ENCODE measurements at regions of chr10 and their contacts with region 1.

Region 1: DNA sequence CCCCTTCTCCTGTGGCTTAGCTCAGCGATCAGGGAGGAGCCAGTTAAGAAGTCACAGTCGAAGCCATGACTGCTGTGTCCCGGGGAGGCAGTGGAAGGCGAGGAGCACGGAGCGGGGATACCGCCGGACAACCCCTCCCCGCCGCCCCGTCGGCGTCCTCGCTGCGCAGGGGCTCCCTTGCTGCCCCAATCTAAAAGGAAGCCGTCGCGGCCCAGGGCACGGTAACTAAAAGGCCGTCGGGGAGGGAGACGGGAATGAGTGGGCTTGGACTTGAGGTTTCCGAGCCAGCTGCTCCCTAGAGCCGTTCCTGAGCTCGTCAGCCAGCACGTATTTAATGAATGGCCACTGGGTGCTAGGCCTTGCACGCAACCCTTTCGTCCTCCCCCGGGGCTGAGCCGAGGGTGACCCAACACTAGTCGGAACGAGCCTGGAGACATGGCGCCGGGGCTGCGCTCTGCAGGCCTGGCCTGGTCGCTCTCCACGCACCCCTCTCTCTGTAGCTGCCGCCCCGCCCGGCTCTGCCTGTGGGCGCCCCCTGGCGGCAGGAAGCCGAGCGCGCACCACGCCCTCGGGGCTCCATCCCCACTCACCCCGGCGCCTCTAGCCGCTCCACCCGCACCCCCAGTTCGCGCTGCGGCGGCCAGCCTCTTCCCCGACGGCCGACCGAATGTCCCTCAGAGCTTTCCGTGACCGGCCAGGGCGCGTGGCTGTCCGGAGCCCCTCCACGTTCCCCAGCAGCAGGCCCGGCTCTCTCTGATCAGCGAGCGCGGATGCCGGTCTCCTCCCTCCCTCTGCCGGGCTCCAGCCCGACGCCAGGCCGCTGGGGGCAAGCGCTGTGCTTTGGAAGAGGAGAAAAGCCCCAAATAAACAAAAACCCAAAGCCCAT is 29.3 kb upstream of the KCNK18 start:
- DNase-seq: peak; percentile 43
- H3K4me3 Mint-ChIP-seq: peak overlapping the region; percentile 14
- H3K27ac Mint-ChIP-seq: no peak overlapping the region
- H3K4me1 Mint-ChIP-seq: no peaks in the 10 kb centered on the region
- H3K27me3 Mint-ChIP-seq: peaks cover 35% of the 10 kb centered on the region
- CTCF ChIP-seq: peak; percentile 95

Region 2: DNA sequence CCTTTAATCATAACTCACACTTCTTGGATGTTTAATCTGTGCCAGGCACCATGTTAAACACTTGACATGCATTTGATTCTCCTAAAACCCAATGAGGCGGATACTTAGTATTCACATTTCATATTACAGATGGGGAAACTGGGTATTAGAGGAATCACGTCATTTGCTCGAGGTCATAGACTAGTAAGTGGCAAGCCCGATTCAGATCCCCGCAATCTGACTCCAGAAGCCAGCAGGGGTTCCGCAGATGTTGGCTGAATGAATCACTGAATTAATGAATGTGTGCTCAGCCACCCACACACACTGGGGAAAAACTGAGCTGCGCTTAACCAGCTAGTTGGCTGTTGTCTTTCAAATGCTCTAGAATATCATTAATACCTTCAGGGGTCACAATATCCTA is 341.2 kb before region 1 on chr10:
- CTCF ChIA-PET with region 1: interaction called, 20 read pairs
- POLR2A ChIA-PET with region 1: no interaction called
- intact Hi-C with region 1: no loop called
- DNase-seq: peak; percentile 63
- H3K4me3 Mint-ChIP-seq: no peak overlapping the region
- H3K27ac Mint-ChIP-seq: no peak overlapping the region
- H3K4me1 Mint-ChIP-seq: no peaks in the 10 kb centered on the region
- H3K27me3 Mint-ChIP-seq: no peaks in the 10 kb centered on the region
- CTCF ChIP-seq: no peak

Region 3: DNA sequence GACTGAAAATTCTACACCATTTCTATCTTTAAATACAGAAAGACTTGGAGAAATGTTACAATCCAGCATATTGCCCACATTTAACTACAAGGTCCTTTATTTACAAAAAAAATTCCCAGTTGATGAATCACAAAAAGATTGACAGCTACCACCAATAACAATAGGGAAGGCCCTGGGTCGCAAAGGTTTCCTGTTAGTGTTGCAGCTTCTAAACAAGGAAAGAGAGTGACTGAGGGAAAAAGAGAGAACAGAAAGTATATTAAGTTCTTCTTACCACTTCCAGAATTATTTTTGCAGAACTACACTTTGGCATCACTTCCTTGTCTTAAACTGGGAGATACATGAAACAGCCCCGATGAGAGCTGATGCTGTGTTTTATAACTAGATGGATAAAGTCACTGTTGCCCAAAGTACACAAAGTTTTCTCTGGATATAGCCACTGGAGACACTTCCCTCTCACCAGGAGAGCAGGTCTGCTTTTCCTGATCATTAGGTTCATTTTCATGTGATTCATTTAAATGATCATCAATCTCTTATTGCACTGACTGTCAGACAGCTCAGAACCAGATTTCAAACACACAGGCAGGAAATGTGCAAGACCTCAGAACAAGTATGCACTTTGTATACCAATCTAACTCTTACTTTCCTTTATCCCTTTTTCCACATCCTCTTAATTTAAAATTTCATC is 220.0 kb before region 1 on chr10:
- CTCF ChIA-PET with region 1: interaction called, 11 read pairs
- POLR2A ChIA-PET with region 1: no interaction called
- intact Hi-C with region 1: loop called (anchors 2 kb)
- DNase-seq: peak; percentile 66
- H3K4me3 Mint-ChIP-seq: peak overlapping the region; percentile 33
- H3K27ac Mint-ChIP-seq: peak overlapping the region; percentile 79
- H3K4me1 Mint-ChIP-seq: peaks cover 15% of the 10 kb centered on the region
- H3K27me3 Mint-ChIP-seq: no peaks in the 10 kb centered on the region
- CTCF ChIP-seq: no peak

Region 4: GRCh38 chr10:117112220-117112619 is 55.8 kb before region 1 on chr10:
- CTCF ChIA-PET with region 1: interaction called, 18 read pairs
- POLR2A ChIA-PET with region 1: no interaction called
- intact Hi-C with region 1: loop called (anchors 5 kb)
- DNase-seq: peak; percentile 22
- H3K4me3 Mint-ChIP-seq: no peak overlapping the region
- H3K27ac Mint-ChIP-seq: no peak overlapping the region
- H3K4me1 Mint-ChIP-seq: no peaks in the 10 kb centered on the region
- H3K27me3 Mint-ChIP-seq: peaks cover 25% of the 10 kb centered on the region
- CTCF ChIP-seq: peak; percentile 35

Measured in MCF 10A (cell line).